Testis (tissue), 5 donors: ENCODE measurements at regions of chr4 and their contacts with region 1.

Region 1: GRCh38 chr4:77618383-77619122 is 12.9 kb downstream of the CXCL13 start:
- DNase-seq: peak; percentile 92
- H3K4me3 ChIP-seq: no peak overlapping the region
- H3K27ac ChIP-seq: no peak overlapping the region
- H3K4me1 ChIP-seq: no peaks in the 10 kb centered on the region
- H3K27me3 ChIP-seq: no peaks in the 10 kb centered on the region
- CTCF ChIP-seq: peak; percentile 73 to 83 (median 78)
- POLR2A ChIP-seq: no peak

Region 2: DNA sequence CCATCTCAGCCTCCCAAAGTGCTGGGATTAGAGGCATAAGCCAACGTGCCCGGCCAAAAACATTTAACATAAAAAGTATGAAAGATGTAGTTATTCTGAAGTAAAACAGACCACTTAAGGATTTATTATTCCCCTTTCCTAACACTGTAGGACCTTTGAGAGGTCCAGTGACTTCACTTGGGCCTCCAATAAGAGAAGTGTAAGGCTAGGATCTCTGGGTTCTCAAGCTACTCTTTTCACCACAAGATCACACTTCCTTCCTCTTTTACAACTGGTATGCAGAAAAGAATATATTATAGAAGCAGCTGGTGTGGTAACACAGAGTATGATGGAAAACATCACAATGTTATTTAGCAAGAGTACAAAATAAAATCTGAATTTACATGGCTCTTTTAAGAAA is 491.7 kb before region 1 on chr4:
- intact Hi-C with region 1: no loop called
- DNase-seq: no peak
- H3K4me3 ChIP-seq: no peak overlapping the region
- H3K27ac ChIP-seq: no peak overlapping the region
- H3K4me1 ChIP-seq: no peaks in the 10 kb centered on the region
- H3K27me3 ChIP-seq: no peaks in the 10 kb centered on the region
- CTCF ChIP-seq: no peak
- POLR2A ChIP-seq: no peak

Region 3: DNA sequence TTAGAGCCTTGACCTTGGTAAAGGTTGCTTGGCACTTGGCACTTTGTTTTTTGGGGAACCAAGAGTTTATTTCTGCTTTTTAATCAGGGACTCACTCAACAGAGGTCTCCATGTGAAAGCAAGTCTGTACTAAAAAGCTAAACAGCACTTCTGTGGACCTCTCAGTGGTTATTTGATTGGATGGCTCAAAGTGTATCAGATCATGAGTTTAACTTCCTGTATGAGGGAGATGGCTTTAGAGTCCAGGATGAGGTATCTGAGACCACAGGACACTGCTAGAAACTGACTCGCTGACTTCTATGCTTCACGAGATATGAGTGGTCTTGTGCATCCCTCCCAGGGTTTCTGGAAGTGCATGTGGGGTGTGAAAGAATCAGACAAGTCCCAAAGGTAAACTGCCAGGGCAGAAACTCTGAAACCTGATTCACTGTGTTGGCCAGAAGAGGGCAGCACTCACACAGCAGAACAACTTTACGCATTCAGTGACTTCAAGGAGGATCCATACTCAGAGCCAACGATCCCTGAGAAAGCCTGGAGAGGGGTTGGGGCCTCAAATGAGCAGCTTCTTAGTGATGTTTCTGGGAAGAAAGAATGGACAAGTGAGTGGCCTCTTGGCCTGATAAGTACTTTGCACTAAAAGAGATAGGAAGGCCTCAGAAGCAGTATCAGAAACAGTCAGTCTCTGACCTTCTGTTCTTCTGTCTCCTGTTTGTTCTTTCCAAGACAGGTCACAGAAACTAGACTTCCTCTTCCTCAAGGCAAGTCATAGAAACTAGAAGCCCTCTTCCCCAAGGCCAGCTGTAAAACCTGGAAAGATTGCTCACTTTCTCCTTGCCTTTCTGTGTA is 233.2 kb before region 1 on chr4:
- intact Hi-C with region 1: loop called (anchors 10 kb)
- DNase-seq: peak; percentile 79
- H3K4me3 ChIP-seq: no peak overlapping the region
- H3K27ac ChIP-seq: no peak overlapping the region
- H3K4me1 ChIP-seq: no peaks in the 10 kb centered on the region
- H3K27me3 ChIP-seq: no peaks in the 10 kb centered on the region
- CTCF ChIP-seq: peak; percentile 50 to 81 (median 70)
- POLR2A ChIP-seq: no peak

Region 4: GRCh38 chr4:77758804-77759203 is 140.3 kb after region 1 on chr4:
- intact Hi-C with region 1: no loop called
- DNase-seq: no peak
- H3K4me3 ChIP-seq: no peak overlapping the region
- H3K27ac ChIP-seq: no peak overlapping the region
- H3K4me1 ChIP-seq: no peaks in the 10 kb centered on the region
- H3K27me3 ChIP-seq: no peaks in the 10 kb centered on the region
- CTCF ChIP-seq: no peak
- POLR2A ChIP-seq: no peak